Calu3 (cell line): ENCODE measurements at regions of chr3 and their contacts with region 1.

Region 1: DNA sequence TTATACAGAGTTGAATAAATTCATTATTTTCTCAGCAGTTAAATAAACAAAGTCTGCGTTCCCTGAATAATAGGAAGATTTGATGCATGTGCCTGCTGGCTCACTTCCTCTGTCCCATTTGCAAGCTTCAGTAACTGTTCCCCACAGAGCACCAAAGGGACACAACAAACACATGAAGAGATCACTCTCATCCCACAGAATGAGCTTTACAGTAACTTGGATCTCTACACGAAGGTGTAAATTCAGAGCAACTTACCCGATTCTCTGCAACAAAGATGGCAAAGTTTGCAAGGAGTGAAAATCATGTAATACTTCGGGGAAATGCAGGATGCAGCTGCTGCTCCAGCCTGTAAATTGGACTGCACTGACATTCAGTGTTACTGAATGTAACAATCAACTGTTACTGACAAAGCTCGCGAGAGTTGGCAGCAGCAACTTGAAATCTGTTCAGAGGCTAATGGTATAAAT is at the start of gene BCHE:
- DNase-seq: peak; percentile 38
- H3K4me3 Mint-ChIP-seq: peak within 1 kb of the TSS; percentile 57
- H3K27ac Mint-ChIP-seq: no peak within 1 kb of the TSS
- H3K4me1 Mint-ChIP-seq: no peaks in the 10 kb centered on the region
- H3K27me3 Mint-ChIP-seq: no peaks in the 10 kb centered on the region
- CTCF ChIP-seq: no peak
- total RNA-seq, gene BCHE: 1.3 TPM in 2 replicates

Region 2: DNA sequence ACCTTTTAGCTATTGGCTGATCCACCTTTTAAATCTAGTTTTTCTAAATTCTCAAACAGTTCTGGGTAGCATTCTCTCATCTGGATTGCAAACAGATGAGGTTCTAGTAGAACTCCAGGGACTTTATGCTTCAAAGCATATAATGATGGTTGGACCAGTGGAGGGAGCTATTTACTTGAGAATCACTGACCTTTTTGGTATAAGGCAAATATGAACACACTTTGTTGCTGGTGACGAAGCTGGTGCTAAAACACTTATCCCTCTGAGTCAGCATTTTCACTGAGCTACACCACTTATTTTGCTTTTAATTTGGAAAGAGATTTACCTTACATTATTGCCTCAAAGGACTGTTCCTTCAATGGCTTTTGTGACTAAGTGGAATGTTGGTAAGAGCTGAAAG is 582.3 kb before region 1 on chr3:
- CTCF ChIA-PET with region 1: no interaction called
- intact Hi-C with region 1: loop called (anchors 10 kb)
- DNase-seq: peak; percentile 42
- H3K4me3 Mint-ChIP-seq: no peak overlapping the region
- H3K27ac Mint-ChIP-seq: no peak overlapping the region
- H3K4me1 Mint-ChIP-seq: no peaks in the 10 kb centered on the region
- H3K27me3 Mint-ChIP-seq: no peaks in the 10 kb centered on the region
- CTCF ChIP-seq: peak; percentile 57

Region 3: GRCh38 chr3:165820671-165821123 is 16.4 kb before region 1 on chr3:
- CTCF ChIA-PET with region 1: no interaction called
- intact Hi-C with region 1: no loop called
- DNase-seq: no peak
- H3K4me3 Mint-ChIP-seq: no peak overlapping the region
- H3K27ac Mint-ChIP-seq: peak overlapping the region; percentile 57
- H3K4me1 Mint-ChIP-seq: peaks cover 9% of the 10 kb centered on the region
- H3K27me3 Mint-ChIP-seq: no peaks in the 10 kb centered on the region
- CTCF ChIP-seq: no peak

Region 4: GRCh38 chr3:166560253-166560652 is 723.2 kb after region 1 on chr3:
- CTCF ChIA-PET with region 1: no interaction called
- intact Hi-C with region 1: no loop called
- DNase-seq: no peak
- H3K4me3 Mint-ChIP-seq: no peak overlapping the region
- H3K27ac Mint-ChIP-seq: no peak overlapping the region
- H3K4me1 Mint-ChIP-seq: no peaks in the 10 kb centered on the region
- H3K27me3 Mint-ChIP-seq: no peaks in the 10 kb centered on the region
- CTCF ChIP-seq: no peak